ENCODE measurements at regions of chr6 and their contacts with region 1.

Region 1: DNA sequence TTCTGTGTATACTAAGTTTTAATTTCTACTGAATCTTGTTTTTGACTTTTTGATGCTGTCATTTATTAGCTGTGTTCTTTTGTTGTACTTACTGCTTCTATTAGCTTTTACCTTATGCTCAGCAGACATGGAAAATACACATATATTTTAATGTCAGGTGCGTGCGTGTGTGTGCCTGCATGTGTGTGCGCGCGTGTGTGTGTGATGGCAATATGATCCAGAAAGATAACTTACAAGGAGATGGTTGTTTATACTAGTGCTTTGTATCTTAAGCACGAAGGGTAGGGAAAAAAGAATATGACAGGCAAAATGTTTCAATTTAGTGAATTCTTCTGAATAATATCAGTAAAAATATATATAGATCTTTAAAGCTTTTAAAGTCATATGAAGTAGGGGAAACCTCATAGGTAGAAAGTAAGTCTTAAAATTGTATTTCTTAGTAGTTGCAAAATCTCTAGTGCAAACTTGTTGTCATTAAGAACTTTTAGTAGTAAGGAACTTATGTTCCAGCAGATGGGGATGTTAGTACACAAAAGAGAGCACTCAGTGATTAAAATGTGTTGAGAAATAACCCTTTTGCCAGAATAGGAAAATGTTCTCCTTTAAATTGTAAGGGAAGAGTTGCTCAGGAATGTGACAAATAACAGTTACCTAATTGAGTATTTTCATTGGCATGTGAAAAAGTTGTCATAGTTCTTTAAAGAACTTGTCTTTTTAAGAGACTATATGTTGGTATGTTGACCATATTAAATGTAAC is 13.2 kb downstream of the QKI start:
- DNase-seq: no peak
- H3K4me3 ChIP-seq: no peak overlapping the region
- H3K27ac ChIP-seq: no peak overlapping the region
- H3K4me1 ChIP-seq: no peaks in the 10 kb centered on the region
- H3K27me3 ChIP-seq: no peaks in the 10 kb centered on the region
- CTCF ChIP-seq: peak in 3 of 4 experiments; percentile 47 to 58 (median 47)
- POLR2A ChIP-seq: no peak

Region 2: DNA sequence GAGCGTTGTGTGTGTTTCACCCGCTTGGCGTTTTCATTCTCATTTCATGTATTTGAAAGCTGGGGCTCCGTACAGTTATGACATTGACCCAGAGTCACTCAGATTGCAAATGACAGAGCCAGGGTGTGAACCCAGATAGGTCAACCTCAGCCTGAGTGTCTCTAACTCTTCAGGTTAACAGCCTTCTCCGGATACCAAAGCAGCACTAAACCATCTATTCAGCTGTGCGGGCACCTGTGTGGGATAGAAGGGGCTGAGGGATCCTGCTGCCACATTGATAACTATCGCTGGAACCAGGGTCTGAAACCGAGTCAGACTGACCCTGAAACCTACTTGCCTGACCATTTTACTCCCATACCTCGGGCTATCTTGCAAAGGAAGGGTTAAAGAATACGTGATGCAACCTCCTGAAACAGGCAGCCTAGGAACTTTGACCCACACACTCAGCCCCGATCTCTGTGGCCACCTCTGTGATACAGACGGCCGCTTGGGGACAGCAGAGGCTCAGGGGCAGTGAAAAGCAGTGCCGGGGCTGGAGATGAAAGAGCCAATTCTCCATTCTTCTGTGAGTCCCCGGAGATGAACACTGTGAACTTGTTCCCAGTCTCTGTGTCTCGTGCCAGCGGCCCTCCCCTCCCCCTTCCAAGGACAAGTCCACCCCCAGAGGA is 246.7 kb before region 1 on chr6:
- intact Hi-C with region 1: loop called (anchors 10 kb)
- DNase-seq: peak; percentile 12
- H3K4me3 ChIP-seq: no peak overlapping the region
- H3K27ac ChIP-seq: no peak overlapping the region
- H3K4me1 ChIP-seq: no peaks in the 10 kb centered on the region
- H3K27me3 ChIP-seq: no peaks in the 10 kb centered on the region
- CTCF ChIP-seq: peak in 3 of 4 experiments; percentile 16 to 52 (median 51)
- POLR2A ChIP-seq: no peak

Region 3: DNA sequence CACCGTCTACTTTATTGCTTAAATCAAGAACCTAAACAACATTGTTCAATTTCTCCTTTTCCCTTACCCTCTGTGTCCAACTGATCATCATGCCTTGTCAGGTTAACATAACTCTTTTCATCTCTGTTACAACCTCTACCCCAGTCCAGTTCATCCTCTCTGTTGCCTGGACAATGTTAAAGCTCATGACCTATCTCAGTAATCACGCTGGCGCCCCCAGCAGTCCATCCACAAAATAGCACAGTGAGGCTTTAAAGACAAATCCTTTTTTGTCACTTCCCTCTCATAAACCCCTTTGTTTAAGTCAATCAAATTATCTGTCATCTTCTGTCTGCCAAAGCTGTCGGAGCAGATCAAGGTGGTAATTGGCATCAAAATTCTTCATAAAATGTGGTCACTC is 127.0 kb after region 1 on chr6:
- intact Hi-C with region 1: loop called (anchors 10 kb)
- DNase-seq: no peak
- H3K4me3 ChIP-seq: no peak overlapping the region
- H3K27ac ChIP-seq: no peak overlapping the region
- H3K4me1 ChIP-seq: no peaks in the 10 kb centered on the region
- H3K27me3 ChIP-seq: no peaks in the 10 kb centered on the region
- CTCF ChIP-seq: peak in 3 of 4 experiments; percentile 24 to 36 (median 36)
- POLR2A ChIP-seq: no peak

Region 4: DNA sequence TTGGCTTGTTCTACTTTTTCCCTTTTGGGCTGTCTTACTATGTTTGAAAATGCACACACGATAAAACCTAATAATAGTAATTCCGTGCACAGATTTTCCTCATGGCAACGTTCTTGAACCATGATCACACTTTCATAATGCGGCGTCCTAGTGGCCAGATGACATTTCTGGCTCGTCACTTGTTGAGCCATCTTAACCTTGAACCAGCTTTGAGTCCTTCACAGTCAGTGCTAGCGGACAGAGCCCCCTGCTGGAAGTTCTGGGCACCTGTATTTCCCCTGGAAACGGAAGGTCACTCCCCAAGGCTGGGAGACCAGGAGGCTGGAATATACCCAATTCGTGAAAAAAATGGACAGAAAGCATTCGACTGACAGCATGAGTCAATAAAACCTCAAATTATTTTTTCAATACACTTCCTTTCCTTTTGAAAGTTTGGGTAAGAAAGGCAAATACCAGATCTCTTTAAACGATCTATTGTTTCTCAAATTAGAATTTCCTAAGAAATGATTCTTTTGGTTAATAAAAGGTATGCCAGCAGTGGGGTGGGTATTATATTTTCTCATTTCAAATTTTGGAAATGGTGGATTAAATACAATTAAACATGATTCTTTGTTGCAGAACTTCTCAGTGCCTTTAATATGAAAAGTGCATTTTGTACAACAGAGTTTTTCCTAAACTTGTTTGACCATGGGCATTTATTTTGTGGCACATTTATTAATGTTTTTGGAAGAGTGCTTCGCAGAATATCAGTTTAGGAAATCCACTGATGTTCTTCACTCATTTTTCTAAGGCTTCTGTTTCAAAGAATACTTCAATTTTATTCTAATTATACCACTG is 529.1 kb after region 1 on chr6:
- intact Hi-C with region 1: loop called (anchors 5 kb)
- DNase-seq: peak; percentile 36
- H3K4me3 ChIP-seq: no peak overlapping the region
- H3K27ac ChIP-seq: no peak overlapping the region
- H3K4me1 ChIP-seq: no peaks in the 10 kb centered on the region
- H3K27me3 ChIP-seq: no peaks in the 10 kb centered on the region
- CTCF ChIP-seq: peak; percentile 54 to 73 (median 64)
- POLR2A ChIP-seq: no peak

Measured in prostate gland (tissue), 2 donors.